ENCODE measurements at regions of chr19 and their contacts with region 1.

Region 1: GRCh38 chr19:29844891-29845572 is 33.2 kb downstream of the CCNE1 start:
- DNase-seq: peak; percentile 93
- H3K4me3 Mint-ChIP-seq: peak overlapping the region; percentile 88
- H3K27ac Mint-ChIP-seq: peak overlapping the region; percentile 80
- H3K4me1 Mint-ChIP-seq: peaks cover 11% of the 10 kb centered on the region
- H3K27me3 Mint-ChIP-seq: peaks cover 9% of the 10 kb centered on the region

Region 2: DNA sequence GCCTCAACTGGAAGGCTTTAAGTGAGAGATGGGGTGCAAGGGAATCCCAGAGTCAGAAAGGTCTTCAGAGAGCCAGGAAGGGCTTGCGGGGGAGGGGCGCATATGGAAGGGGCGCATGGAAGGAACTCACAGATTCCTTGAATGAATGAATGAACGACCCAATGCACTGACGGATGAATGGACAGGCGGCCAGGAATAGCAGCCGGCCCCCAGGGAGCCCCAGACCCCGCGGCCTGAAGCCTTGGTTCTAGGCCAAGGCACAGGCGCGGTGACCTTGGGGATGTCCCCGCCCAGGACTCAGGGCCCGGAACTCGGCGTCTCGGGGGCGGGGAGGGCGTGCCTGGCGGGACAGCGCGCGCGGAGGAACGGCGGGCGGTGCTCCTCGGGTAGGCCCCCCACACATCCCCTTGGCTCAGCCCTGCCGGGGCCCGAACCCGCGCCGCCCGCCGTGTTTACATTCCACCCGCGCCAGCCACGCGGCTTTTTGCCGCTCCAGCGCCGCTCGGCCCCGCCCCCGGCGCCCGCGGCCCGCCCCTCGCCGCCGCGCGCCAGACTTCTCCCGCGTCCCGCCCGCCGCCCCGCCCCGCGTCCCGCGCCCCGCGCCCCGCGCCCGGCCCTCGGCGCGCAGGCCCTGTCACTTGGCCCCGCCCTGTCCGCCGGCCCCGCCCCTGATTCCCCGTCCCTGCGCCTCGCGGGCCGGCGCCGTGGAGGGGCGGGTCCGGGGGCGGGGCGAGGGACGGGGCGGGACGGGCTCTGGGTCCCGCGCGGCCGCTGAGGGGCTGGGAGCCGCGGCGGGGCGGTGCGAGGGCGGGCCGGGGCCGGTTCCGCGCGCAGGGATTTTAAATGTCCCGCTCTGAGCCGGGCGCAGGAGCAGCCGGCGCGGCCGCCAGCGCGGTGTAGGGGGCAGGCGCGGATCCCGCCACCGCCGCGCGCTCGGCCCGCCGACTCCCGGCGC is 33.6 kb before region 1 on chr19 and contains the start of gene CCNE1:
- intact Hi-C with region 1: loop called (anchors 1 kb)
- DNase-seq: peak; percentile 89
- H3K4me3 Mint-ChIP-seq: peak within 1 kb of the TSS; percentile 86
- H3K27ac Mint-ChIP-seq: peak within 1 kb of the TSS; percentile 95
- H3K4me1 Mint-ChIP-seq: peaks cover 17% of the 10 kb centered on the region
- H3K27me3 Mint-ChIP-seq: no peaks in the 10 kb centered on the region
- total RNA-seq, gene CCNE1: 37.4 and 39.6 TPM in 2 replicates

Region 3: DNA sequence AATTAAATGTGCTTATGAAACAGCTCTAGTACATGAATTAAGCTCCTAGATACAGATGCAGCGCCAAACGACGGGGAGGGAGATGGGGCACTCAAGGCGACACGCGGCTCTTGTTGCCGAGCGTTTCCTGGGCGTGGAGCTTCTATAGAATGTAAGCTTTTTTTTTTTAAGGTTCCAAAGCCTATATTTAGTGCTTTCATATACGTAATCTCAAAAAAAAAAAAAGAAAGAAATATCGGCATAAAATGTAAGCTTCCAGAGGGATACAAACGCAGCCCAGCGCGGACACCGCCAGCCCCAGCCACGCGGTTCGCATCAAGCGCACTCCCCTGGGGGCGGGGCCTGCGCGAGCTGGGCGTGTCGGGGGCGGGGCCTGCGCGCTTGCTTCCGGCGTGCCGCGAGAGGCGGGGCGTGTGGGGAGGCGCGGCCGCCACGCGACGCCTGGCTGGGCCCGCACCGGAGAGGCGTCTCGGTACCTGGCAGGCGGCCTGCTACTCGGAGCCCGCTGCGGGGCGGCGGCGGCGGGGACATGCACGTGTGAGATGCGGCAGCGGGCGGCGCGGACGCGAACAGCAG is 96.9 kb after region 1 on chr19 and contains the start of gene URI1:
- intact Hi-C with region 1: loop called (anchors 1 kb)
- DNase-seq: peak; percentile 90
- H3K4me3 Mint-ChIP-seq: peak within 1 kb of the TSS; percentile 90
- H3K27ac Mint-ChIP-seq: peak within 1 kb of the TSS; percentile 88
- H3K4me1 Mint-ChIP-seq: peaks cover 38% of the 10 kb centered on the region
- H3K27me3 Mint-ChIP-seq: no peaks in the 10 kb centered on the region
- total RNA-seq, gene URI1: 55.6 and 56.8 TPM in 2 replicates

Region 4: GRCh38 chr19:30312582-30313352 is 467.7 kb after region 1 on chr19:
- intact Hi-C with region 1: no loop called
- DNase-seq: no peak
- H3K4me3 Mint-ChIP-seq: no peak overlapping the region
- H3K27ac Mint-ChIP-seq: no peak overlapping the region
- H3K4me1 Mint-ChIP-seq: no peaks in the 10 kb centered on the region
- H3K27me3 Mint-ChIP-seq: no peaks in the 10 kb centered on the region